AG04449 (cell line): ENCODE measurements at regions of chr4 and their contacts with region 1.

Region 1: DNA sequence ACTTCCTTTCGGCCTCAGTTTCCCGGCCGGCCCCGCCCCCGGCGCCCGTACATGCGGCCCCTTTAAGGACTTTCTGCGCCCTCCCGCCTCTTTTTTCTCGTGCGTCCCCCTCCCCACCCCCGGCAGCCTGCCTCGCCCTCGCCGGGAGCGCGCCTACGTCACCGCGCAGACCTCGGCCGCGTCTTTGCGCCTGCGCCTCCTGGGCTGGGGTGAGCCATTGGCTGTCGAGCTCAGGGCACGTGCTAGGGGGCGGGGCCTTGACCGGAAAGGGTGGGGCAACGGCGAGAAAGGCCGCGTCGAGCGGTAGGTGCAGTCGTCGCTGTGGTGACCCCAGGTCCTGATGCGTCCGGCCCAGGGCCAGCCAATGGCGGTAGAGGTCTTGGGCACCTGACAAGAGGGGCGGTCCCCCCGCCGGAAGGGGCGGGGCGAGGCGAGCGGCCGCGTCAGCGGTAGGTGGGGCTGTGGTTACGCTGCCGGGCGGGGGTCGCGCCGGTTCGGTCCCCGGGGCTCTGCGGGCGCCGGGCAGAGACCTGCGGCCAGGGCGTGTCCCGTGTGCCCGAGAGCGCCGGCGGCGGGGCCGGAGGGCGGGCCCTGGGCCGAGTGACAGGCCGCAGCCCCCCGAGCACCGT is at the start of gene UVSSA:
- DNase-seq: peak; percentile 97
- H3K4me3 ChIP-seq: peak within 1 kb of the TSS; percentile 76
- CTCF ChIP-seq: no peak

Region 2: GRCh38 chr4:1249148-1249730 is 97.7 kb before region 1 on chr4:
- CTCF ChIA-PET with region 1: interaction called, 4 read pairs
- POLR2A ChIA-PET with region 1: interaction called, 16 read pairs
- DNase-seq: no peak
- H3K4me3 ChIP-seq: peak overlapping the region; percentile 58
- CTCF ChIP-seq: no peak